ENCODE measurements at regions of chr11 and their contacts with region 1.

Region 1: DNA sequence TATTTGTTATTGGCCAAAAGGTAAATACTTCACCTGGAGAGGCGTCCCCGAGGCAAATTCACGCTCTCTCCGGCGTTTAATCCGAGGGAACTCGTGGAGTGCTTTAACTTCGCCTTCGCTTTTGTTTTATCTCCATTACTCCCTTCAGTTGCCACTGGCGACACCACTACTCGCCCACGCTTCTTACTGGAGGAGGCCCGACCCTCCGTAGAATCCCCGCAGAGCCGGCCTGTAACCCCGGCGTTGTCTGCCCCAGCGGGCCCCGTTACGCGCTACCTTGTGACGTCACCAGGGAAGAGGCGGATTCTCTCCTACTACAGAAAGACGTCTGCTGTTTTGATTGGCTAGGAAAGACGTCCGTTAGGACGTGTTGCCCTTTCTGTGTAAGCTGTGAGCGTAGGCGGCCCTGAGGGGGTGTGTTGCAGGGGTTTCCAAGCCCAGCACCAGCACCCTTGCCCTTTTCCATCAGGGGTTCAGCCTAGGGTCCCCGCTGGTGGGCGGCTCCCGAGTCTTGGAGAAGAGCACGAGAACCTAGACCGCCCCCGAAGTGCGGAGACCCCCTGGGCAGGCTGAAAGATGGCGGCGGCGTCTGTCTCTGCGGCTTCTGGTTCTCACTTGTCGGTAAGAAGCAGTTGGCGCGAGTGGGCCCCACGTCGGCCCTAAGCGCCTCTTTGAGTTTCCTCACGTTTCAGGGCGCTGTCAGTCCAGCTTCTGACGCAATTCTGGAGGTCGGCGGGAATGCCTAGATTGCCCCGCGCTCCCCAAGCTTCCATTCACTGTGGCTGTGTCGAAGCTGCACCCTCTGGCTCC is at the start of gene CEP57:
- DNase-seq: peak; percentile 92
- H3K4me3 Mint-ChIP-seq: peak within 1 kb of the TSS; percentile 98
- H3K27ac Mint-ChIP-seq: peak within 1 kb of the TSS; percentile 100
- H3K4me1 Mint-ChIP-seq: peaks cover 52% of the 10 kb centered on the region
- H3K27me3 Mint-ChIP-seq: no peaks in the 10 kb centered on the region
- total RNA-seq, gene CEP57: 88.3 and 94.5 TPM in 2 replicates

Region 2: DNA sequence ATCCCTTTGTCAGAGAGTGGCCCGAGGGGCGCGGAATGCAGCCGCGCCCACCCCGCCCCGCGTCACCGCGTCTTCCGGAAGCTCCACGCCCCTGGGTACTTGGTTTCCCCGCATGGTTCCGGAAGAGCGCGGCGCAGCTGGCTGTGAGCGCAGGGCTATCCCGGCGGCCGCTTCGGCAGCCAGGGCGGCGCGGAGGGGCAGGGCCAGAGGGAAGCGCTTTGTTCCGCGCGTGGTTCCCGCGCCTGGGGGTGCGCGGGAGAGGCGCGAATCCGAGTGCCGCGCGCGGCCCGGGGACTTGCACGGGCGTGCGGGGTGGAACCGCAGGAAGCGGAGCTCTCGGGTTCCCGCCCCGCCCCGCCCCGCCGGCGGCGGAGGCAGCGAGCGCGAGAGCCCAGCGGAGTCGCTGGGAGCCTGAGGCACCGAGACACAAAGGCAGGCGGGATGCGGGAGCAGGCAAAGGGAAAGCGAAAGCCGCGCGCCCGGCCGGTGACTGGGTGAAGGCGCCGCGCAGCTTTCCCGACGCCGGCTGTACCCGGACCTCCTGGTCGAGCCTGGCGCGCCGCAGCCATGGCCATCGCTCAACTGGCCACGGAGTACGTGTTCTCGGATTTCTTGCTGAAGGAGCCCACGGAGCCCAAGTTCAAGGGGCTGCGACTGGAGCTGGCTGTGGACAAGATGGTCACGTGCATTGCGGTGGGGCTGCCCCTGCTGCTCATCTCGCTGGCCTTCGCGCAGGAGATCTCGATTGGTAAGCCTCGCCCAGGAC is 1661.4 kb before region 1 on chr11 and contains the start of gene PANX1:
- intact Hi-C with region 1: loop called (anchors 5 kb)
- DNase-seq: peak; percentile 71
- H3K4me3 Mint-ChIP-seq: peak within 1 kb of the TSS; percentile 87
- H3K27ac Mint-ChIP-seq: peak within 1 kb of the TSS; percentile 84
- H3K4me1 Mint-ChIP-seq: peaks cover 24% of the 10 kb centered on the region
- H3K27me3 Mint-ChIP-seq: no peaks in the 10 kb centered on the region
- total RNA-seq, gene PANX1: 18.1 and 20.0 TPM in 2 replicates

Region 3: DNA sequence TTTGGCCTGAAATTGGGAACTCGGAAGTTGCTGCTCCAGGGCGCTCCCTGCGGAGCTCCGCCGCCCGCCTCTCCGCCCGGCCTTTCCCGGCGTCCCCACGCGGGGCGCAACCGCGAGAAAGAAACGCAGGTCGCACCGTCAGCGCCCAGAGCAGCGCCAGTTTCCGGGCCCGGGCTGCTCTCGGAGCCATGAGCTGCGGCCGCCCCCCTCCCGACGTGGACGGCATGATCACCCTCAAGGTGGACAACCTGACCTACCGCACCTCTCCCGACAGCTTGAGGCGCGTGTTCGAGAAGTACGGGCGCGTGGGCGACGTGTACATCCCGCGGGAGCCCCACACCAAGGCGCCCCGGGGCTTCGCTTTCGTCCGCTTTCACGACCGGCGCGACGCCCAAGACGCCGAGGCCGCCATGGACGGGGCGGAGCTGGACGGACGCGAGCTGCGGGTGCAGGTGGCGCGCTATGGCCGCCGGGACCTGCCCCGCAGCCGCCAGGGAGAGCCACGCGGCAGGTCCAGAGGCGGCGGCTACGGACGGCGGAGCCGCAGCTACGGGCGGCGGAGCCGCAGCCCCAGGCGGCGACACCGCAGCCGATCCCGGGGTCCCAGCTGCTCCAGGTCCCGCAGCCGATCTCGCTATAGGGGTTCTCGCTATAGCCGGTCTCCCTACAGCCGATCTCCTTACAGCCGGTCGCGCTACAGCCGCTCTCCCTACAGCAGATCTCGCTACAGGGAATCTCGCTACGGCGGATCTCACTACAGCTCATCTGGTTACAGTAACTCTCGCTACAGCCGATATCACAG is 723.1 kb before region 1 on chr11:
- intact Hi-C with region 1: loop called (anchors 1 kb)
- DNase-seq: peak; percentile 70
- H3K4me3 Mint-ChIP-seq: peak overlapping the region; percentile 91
- H3K27ac Mint-ChIP-seq: peak overlapping the region; percentile 93
- H3K4me1 Mint-ChIP-seq: peaks cover 18% of the 10 kb centered on the region
- H3K27me3 Mint-ChIP-seq: peaks cover 16% of the 10 kb centered on the region

Region 4: GRCh38 chr11:95231127-95231880 is 559.0 kb before region 1 on chr11 and contains the start of gene SESN3:
- intact Hi-C with region 1: loop called (anchors 1 kb)
- DNase-seq: peak; percentile 99
- H3K4me3 Mint-ChIP-seq: peak within 1 kb of the TSS; percentile 92
- H3K27ac Mint-ChIP-seq: peak within 1 kb of the TSS; percentile 77
- H3K4me1 Mint-ChIP-seq: peaks cover 38% of the 10 kb centered on the region
- H3K27me3 Mint-ChIP-seq: peaks cover 4% of the 10 kb centered on the region
- total RNA-seq, gene SESN3: 73.2 and 74.9 TPM in 2 replicates

Region 5: GRCh38 chr11:95912902-95913560 is 122.7 kb after region 1 on chr11:
- intact Hi-C with region 1: no loop called
- DNase-seq: no peak
- H3K4me3 Mint-ChIP-seq: no peak overlapping the region
- H3K27ac Mint-ChIP-seq: no peak overlapping the region
- H3K4me1 Mint-ChIP-seq: peaks cover 19% of the 10 kb centered on the region
- H3K27me3 Mint-ChIP-seq: no peaks in the 10 kb centered on the region

Region 6: GRCh38 chr11:95923728-95924413 is 133.5 kb after region 1 on chr11 and contains the start of gene MTMR2:
- intact Hi-C with region 1: loop called (anchors 2 kb)
- DNase-seq: peak; percentile 39
- H3K4me3 Mint-ChIP-seq: peak within 1 kb of the TSS; percentile 100
- H3K27ac Mint-ChIP-seq: peak within 1 kb of the TSS; percentile 99
- H3K4me1 Mint-ChIP-seq: peaks cover 23% of the 10 kb centered on the region
- H3K27me3 Mint-ChIP-seq: peaks cover 6% of the 10 kb centered on the region
- total RNA-seq, gene MTMR2: 41.7 and 45.4 TPM in 2 replicates

Region 7: GRCh38 chr11:96242971-96243647 is 452.8 kb after region 1 on chr11:
- intact Hi-C with region 1: loop called (anchors 10 kb)
- DNase-seq: peak; percentile 74
- H3K4me3 Mint-ChIP-seq: peak overlapping the region; percentile 79
- H3K27ac Mint-ChIP-seq: peak overlapping the region; percentile 89
- H3K4me1 Mint-ChIP-seq: peaks cover 46% of the 10 kb centered on the region
- H3K27me3 Mint-ChIP-seq: no peaks in the 10 kb centered on the region

Region 8: GRCh38 chr11:96424693-96425092 is 634.4 kb after region 1 on chr11:
- intact Hi-C with region 1: loop called (anchors 1 kb)
- DNase-seq: no peak
- H3K4me3 Mint-ChIP-seq: no peak overlapping the region
- H3K27ac Mint-ChIP-seq: no peak overlapping the region
- H3K4me1 Mint-ChIP-seq: peaks cover 17% of the 10 kb centered on the region
- H3K27me3 Mint-ChIP-seq: peaks cover 33% of the 10 kb centered on the region

Measured in activated T-helper 2 cell treated with anti-CD3 and anti-CD28 coated beads, Interferon-gamma antibody, Interleukin-2, Interleukin-4, amounts not matched to agents 10 μg/mL and 5 μg/mL and 100 μg/mL, durations not matched to agents 14 hours and 24 hours and 36 hours (primary cell).